ENCODE measurements at regions of chr9 and their contacts with region 1.

Region 1: GRCh38 chr9:70111042-70111602 is 67.5 kb downstream of the MAMDC2 start:
- DNase-seq: peak in 1 of 2 donors; percentile 84
- H3K4me3 ChIP-seq: no peak overlapping the region
- H3K27ac ChIP-seq: no peak overlapping the region
- H3K4me1 ChIP-seq: peaks cover 8% of the 10 kb centered on the region
- H3K27me3 ChIP-seq: no peaks in the 10 kb centered on the region
- CTCF ChIP-seq: peak; percentile 58 to 89 (median 82)
- POLR2A ChIP-seq: no peak

Region 2: GRCh38 chr9:69971643-69972449 is 139.3 kb before region 1 on chr9:
- intact Hi-C with region 1: loop called (anchors 5 kb)
- DNase-seq: no peak
- H3K4me3 ChIP-seq: no peak overlapping the region
- H3K27ac ChIP-seq: no peak overlapping the region
- H3K4me1 ChIP-seq: peaks cover 8% of the 10 kb centered on the region
- H3K27me3 ChIP-seq: no peaks in the 10 kb centered on the region
- CTCF ChIP-seq: peak; percentile 38 to 76 (median 67)
- POLR2A ChIP-seq: no peak

Measured in vagina (tissue), 2 donors.